Uterus (tissue), 4 donors: ENCODE measurements at regions of chr14 and their contacts with region 1.

Region 1: GRCh38 chr14:35875296-35875695 is 49.2 kb downstream of the BRMS1L start:
- DNase-seq: no peak
- H3K4me3 ChIP-seq: no peak overlapping the region
- H3K27ac ChIP-seq: no peak overlapping the region
- H3K4me1 ChIP-seq: no peaks in the 10 kb centered on the region
- H3K27me3 ChIP-seq: no peaks in the 10 kb centered on the region
- CTCF ChIP-seq: no peak
- POLR2A ChIP-seq: no peak

Region 2: GRCh38 chr14:35814371-35815005 is 60.8 kb before region 1 on chr14:
- intact Hi-C with region 1: no loop called
- DNase-seq: no peak
- H3K4me3 ChIP-seq: no peak overlapping the region
- H3K27ac ChIP-seq: no peak overlapping the region
- H3K4me1 ChIP-seq: no peaks in the 10 kb centered on the region
- H3K27me3 ChIP-seq: no peaks in the 10 kb centered on the region
- CTCF ChIP-seq: peak; percentile 21 to 38 (median 31)
- POLR2A ChIP-seq: no peak

Region 3: DNA sequence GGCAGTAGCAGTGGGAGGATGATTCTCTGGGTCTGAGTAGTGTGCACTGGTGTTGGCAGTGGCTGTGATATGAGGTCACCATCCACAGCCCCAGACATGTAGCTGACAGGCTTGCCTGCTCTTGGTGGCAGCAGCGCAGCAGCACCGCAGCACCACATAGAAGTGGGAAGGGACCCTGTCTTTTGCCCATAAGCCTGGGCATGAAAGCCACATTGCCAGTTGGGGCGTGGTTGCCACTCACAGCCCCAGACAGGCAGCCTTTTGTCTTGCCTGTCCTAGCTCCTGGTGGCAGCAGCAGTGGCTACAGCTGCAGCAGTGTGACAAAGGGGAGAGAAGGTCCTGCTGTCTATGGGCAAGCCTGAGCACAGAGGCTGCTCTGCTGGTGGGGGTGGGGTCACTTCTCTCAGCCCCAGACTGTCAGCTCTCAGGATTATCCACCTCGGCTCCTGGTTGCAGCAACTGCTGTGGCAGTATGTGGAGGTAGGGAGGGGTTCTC is 22.4 kb after region 1 on chr14:
- intact Hi-C with region 1: loop called (anchors 2 kb)
- DNase-seq: no peak
- H3K4me3 ChIP-seq: no peak overlapping the region
- H3K27ac ChIP-seq: no peak overlapping the region
- H3K4me1 ChIP-seq: no peaks in the 10 kb centered on the region
- H3K27me3 ChIP-seq: no peaks in the 10 kb centered on the region
- CTCF ChIP-seq: no peak
- POLR2A ChIP-seq: no peak

Region 4: DNA sequence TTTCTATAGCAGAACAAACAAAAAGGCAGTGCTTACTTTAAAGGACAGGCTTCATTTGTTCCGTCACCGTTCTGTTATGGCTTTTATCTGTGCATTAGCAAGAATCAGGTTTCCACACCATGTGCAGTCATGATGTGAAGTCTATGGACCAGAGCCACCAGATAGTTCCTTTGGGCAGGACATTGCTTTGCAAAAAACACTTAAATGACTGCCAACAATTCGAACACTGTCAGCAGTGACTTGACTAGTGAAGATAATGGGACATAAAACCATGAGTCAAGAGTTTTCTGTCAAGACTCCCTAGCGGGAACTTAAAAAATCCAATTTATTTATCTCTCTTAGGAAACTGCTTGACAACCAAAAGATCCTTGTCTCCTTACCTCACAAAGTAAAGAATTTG is 564.5 kb after region 1 on chr14:
- intact Hi-C with region 1: no loop called
- DNase-seq: no peak
- H3K4me3 ChIP-seq: no peak overlapping the region
- H3K27ac ChIP-seq: no peak overlapping the region
- H3K4me1 ChIP-seq: no peaks in the 10 kb centered on the region
- H3K27me3 ChIP-seq: no peaks in the 10 kb centered on the region
- CTCF ChIP-seq: no peak
- POLR2A ChIP-seq: no peak